ENCODE measurements at regions of chr11 and their contacts with region 1.

Region 1: GRCh38 chr11:10455637-10456487 is 798 bp downstream of the AMPD3 start:
- DNase-seq: peak; percentile 83
- CTCF ChIP-seq: no peak

Region 2: GRCh38 chr11:10405855-10406592 is 49.8 kb before region 1 on chr11:
- CTCF ChIA-PET with region 1: interaction called, 10 read pairs
- POLR2A ChIA-PET with region 1: no interaction called
- DNase-seq: peak; percentile 63
- CTCF ChIP-seq: peak; percentile 56

Region 3: DNA sequence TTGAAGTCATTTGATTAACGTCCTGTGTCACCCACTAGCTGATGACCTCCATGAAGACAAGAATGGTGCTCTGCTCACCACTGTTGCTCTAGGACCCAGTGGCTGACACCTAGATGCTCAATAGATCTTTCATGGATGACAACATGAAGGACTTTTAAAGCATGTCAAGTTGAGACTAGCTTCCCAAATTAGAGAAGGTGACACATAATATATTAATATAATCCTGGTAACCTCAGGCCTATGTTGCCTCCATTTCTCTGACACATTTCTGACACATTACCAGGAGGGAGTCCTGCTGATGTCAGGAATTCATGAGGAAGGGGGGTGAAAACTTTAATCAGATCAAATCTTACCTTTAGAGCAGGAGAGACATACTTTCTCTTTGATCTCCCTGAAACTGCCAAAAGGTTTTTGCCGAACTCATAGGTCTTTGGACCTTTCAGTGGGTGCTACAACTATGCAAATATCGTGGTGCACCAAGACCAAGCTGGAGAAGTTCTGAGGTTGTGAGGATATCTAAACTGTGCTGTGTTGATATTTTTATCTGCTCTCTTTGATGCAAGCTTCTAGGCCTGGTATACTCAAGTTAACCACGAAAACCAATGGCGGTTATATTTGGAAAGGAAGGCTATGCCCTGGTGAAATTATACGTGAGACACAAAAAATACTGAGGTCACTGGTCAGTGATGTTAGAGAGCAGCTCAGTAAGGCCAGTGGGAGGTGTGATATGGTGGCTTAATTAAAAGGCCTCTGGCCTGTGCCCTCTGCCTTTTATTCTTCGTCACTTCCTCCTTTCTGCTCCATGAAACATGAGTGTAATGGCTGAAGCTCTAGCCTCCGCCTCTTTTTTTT is 14.0 kb before region 1 on chr11:
- CTCF ChIA-PET with region 1: interaction called, 67 read pairs
- POLR2A ChIA-PET with region 1: interaction called, 10 read pairs
- DNase-seq: peak; percentile 69
- CTCF ChIP-seq: no peak